Ascending aorta (tissue), 2 donors: ENCODE measurements at regions of chr4 and their contacts with region 1.

Region 1: DNA sequence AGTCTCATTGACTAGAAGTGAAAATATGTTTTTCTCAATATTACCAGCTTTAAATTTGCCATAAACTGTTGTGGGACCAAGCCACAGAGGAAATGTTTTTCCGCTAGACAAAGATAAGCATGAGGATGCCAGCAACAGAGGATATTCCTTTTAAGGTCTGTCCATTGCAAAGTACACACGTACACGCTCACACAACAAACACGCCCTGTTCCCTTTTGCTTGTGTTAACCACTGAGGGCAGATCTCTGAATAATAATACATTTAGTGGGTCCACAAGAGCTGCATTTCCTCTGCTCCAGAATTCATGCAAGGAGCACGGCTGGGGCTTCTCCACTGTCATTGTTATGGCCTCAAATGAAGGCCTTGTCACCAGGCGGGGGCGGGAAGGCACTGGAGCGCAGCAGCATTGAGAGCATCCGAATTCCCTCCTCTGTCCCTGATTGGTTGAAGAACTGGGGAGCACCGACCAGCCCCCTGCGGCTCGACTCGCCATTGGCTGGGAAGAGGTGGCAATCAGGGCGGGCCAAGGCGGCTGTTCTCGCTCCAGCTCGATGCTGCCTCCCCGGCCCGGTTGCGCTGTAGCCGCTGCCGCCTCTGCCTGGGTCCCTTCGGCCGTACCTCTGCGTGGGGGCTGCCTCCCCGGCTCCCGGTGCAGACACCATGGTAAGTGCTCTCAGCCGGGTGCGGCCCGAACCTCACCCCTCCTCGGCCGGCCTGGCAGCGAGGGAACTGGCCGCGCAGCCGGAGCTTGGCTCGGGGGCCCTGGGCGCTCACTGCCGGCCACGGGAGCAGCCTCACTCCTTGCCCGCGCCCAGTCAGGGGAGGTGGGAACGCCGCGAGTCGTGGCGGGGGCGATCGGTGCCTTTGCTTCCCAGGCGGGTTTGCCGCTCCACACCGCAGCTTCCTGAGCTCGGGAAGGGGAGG is at the start of gene GUCY1B1:
- DNase-seq: peak; percentile 82 to 97
- H3K4me3 ChIP-seq: peak within 1 kb of the TSS; percentile 80 to 94
- H3K27ac ChIP-seq: peak within 1 kb of the TSS; percentile 93 to 94
- H3K4me1 ChIP-seq: peaks cover 0 to 6% of the 10 kb centered on the region in 2 donors
- H3K27me3 ChIP-seq: no peaks in the 10 kb centered on the region
- CTCF ChIP-seq: peak; percentile 29 to 60 (median 36)
- total RNA-seq, gene GUCY1B1: 34.9 TPM

Region 2: GRCh38 chr4:155376387-155377268 is 382.1 kb before region 1 on chr4 and contains the start of gene MAP9:
- intact Hi-C with region 1: loop called (anchors 5 kb)
- DNase-seq: peak; percentile 73 to 95
- H3K4me3 ChIP-seq: peak within 1 kb of the TSS; percentile 56 to 93
- H3K27ac ChIP-seq: peak within 1 kb of the TSS; percentile 31 to 58
- H3K4me1 ChIP-seq: no peaks in the 10 kb centered on the region
- H3K27me3 ChIP-seq: no peaks in the 10 kb centered on the region
- CTCF ChIP-seq: no peak
- total RNA-seq, gene MAP9: 5.2 TPM

Region 3: DNA sequence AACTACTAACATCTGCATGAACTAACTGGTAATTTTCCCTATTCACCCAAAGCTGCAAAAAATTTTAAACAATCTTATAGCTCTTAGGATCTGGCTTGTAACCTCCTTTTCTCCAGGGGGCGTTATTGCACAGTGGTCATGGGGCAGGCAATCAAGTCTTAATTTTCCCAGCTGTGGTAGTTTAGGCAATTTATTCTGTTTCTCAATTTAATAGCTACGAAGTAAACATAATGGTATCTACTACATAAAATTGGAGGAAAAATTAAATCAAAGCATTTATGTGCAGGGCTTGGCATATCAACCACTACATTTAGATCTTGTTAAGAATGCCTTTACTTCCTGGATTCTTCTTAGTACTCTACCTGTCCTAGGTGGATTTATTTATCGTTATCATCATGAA is 229.5 kb before region 1 on chr4:
- intact Hi-C with region 1: loop called (anchors 5 kb)
- DNase-seq: no peak
- H3K4me3 ChIP-seq: no peak overlapping the region
- H3K27ac ChIP-seq: no peak overlapping the region
- H3K4me1 ChIP-seq: peaks cover 0 to 4% of the 10 kb centered on the region in 2 donors
- H3K27me3 ChIP-seq: no peaks in the 10 kb centered on the region
- CTCF ChIP-seq: peak in 1 of 3 experiments; percentile 28

Region 4: GRCh38 chr4:155675709-155676429 is 82.9 kb before region 1 on chr4:
- intact Hi-C with region 1: no loop called
- DNase-seq: no peak
- H3K4me3 ChIP-seq: peak overlapping the region in 1 of 2 donors; percentile 49
- H3K27ac ChIP-seq: peak overlapping the region; percentile 58 to 67
- H3K4me1 ChIP-seq: peaks cover 0 to 50% of the 10 kb centered on the region in 2 donors
- H3K27me3 ChIP-seq: no peaks in the 10 kb centered on the region
- CTCF ChIP-seq: no peak

Region 5: DNA sequence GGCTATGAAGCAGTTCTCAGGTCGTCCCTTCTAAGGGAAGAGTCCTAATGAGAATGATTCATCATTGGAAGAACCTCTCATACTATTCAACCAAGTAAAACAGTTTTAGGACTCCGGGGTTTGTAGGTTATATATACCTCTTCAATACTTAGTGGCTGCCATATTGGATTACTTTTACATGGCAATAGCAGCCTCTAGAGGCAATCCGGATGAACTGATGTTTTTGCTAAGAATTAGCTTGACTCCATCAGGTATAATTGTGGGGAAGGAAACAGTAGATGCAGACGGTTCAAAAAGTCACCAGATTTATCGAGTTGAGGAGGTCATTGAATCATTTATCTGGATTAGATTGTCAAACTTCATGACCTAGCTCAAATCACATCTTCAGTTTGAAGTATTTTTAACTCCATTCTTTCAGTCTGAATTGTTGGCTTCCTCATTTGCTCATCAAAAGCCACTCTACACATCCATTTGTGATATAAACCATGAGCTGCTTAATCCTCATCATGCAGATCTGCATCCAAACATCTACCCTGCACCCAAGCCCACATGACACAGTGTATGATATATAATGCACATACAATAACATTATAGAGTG is 28.5 kb after region 1 on chr4:
- intact Hi-C with region 1: loop called (anchors 2 kb)
- DNase-seq: no peak
- H3K4me3 ChIP-seq: no peak overlapping the region
- H3K27ac ChIP-seq: no peak overlapping the region
- H3K4me1 ChIP-seq: peaks cover 0 to 8% of the 10 kb centered on the region in 2 donors
- H3K27me3 ChIP-seq: no peaks in the 10 kb centered on the region
- CTCF ChIP-seq: peak; percentile 47 to 75 (median 69)

Region 6: GRCh38 chr4:155953151-155954114 is 194.7 kb after region 1 on chr4 and contains the start of gene CTSO:
- intact Hi-C with region 1: loop called (anchors 1 kb)
- DNase-seq: peak; percentile 20 to 81
- H3K4me3 ChIP-seq: peak within 1 kb of the TSS; percentile 85 to 98
- H3K27ac ChIP-seq: peak within 1 kb of the TSS; percentile 98
- H3K4me1 ChIP-seq: peaks cover 0 to 4% of the 10 kb centered on the region in 2 donors
- H3K27me3 ChIP-seq: no peaks in the 10 kb centered on the region
- CTCF ChIP-seq: peak; percentile 37 to 80 (median 52)
- total RNA-seq, gene CTSO: 7.5 TPM

Region 7: DNA sequence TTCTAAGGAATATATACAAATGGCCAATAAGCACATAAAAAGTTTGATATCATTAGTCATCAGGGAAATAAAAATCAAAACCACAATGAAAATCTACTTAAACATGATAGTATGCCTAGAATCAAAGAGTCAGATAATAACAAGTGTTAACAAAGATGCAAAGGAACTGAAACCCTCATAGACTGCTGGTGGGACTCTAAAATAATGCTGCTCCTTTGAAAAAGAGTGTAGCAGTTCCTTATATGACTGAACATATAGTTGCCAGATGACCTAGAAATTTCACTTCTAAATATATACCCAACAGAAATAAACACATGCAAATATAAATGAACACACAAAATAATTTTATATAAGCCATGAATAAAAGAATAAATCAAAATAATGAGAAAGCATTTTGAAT is 400.0 kb after region 1 on chr4:
- intact Hi-C with region 1: no loop called
- DNase-seq: no peak
- H3K4me3 ChIP-seq: no peak overlapping the region
- H3K27ac ChIP-seq: no peak overlapping the region
- H3K4me1 ChIP-seq: no peaks in the 10 kb centered on the region
- H3K27me3 ChIP-seq: no peaks in the 10 kb centered on the region
- CTCF ChIP-seq: no peak